HEK293 (cell line): ENCODE measurements at regions of chr16 and their contacts with region 1.

Region 1: GRCh38 chr16:67816240-67817031 is 9.7 kb downstream of the TSNAXIP1 start:
- H3K4me3 ChIP-seq: no peak overlapping the region
- H3K27ac ChIP-seq: no peak overlapping the region
- H3K4me1 ChIP-seq: no peaks in the 10 kb centered on the region
- CTCF ChIP-seq: peak; percentile 98

Region 2: GRCh38 chr16:66304151-66304550 is 1512.3 kb before region 1 on chr16:
- CTCF ChIA-PET with region 1: no interaction called
- POLR2A ChIA-PET with region 1: no interaction called
- H3K4me3 ChIP-seq: no peak overlapping the region
- H3K27ac ChIP-seq: no peak overlapping the region
- H3K4me1 ChIP-seq: no peaks in the 10 kb centered on the region
- CTCF ChIP-seq: no peak

Region 3: DNA sequence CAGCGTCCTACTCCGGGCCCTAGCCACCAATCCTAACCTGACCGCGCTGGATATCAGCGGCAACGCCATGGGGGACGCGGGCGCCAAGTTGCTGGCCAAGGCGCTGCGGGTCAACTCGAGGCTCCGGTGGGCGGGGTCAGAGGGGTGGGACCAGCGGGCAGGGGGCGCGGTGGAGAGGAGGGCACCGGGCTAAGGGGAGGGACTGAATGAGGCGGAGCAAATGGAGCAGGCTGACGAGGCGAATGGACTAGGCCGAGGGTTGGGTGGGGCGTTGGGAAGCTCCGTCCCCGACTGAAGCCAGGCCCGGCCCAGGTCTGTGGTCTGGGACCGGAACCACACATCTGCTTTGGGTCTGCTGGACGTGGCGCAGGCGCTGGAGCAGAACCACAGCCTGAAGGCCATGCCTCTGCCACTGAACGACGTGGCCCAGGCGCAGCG is 166.9 kb before region 1 on chr16:
- CTCF ChIA-PET with region 1: no interaction called
- POLR2A ChIA-PET with region 1: no interaction called
- H3K4me3 ChIP-seq: no peak overlapping the region
- H3K27ac ChIP-seq: no peak overlapping the region
- H3K4me1 ChIP-seq: peaks cover 4% of the 10 kb centered on the region; the same call in 1 of the 2 replicates
- CTCF ChIP-seq: no peak

Region 4: GRCh38 chr16:67672739-67673662 is 143.4 kb before region 1 on chr16:
- CTCF ChIA-PET with region 1: interaction called, 31 read pairs
- POLR2A ChIA-PET with region 1: no interaction called
- H3K4me3 ChIP-seq: no peak overlapping the region
- H3K27ac ChIP-seq: no peak overlapping the region
- H3K4me1 ChIP-seq: 0 out of 2 replicates have a peak, but pooled peaks cover 3% of the 10 kb centered on the region
- CTCF ChIP-seq: peak; percentile 89

Region 5: GRCh38 chr16:67841764-67842508 is 25.5 kb after region 1 on chr16 and contains the start of gene THAP11:
- CTCF ChIA-PET with region 1: interaction called, 15 read pairs
- POLR2A ChIA-PET with region 1: interaction called, 5 read pairs
- H3K4me3 ChIP-seq: peak within 1 kb of the TSS; percentile 92
- H3K27ac ChIP-seq: peak within 1 kb of the TSS; percentile 99
- H3K4me1 ChIP-seq: peaks cover 16% of the 10 kb centered on the region
- CTCF ChIP-seq: peak; percentile 96

Region 6: DNA sequence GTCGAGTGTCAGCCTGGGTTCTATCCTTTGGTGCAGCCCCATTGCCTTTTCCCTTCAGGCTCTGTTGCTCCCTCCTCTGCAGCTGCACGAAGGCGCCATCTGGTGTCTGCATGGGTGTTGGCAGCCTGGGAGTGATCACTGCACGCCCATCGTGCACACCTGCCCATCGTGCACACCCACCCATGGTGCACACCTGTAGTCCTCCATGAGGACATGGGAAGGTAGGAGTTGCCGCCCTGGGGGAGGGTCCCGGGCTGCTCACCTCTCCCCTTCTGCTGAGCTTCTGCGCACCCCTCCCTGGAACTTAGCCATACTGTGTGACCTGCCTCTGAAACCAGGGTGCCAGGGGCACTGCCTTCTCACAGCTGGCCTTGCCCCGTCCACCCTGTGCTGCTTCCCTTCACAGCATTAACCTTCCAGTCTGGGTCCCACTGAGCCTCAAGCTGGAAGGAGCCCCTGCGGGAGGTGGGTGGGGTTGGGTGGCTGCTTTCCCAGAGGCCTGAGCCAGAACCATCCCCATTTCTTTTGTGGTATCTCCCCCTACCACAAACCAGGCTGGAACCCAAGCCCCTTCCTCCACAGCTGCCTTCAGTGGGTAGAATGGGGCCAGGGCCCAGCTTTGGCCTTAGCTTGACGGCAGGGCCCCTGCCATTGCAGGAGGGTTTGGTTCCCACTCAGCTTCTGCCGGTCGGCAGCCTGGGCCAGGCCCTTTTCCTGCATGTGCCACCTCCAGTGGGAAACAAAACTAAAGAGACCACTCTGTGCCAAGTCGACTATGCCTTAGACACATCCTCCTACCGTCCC is 112.3 kb after region 1 on chr16:
- CTCF ChIA-PET with region 1: interaction called, 16 read pairs
- POLR2A ChIA-PET with region 1: no interaction called
- H3K4me3 ChIP-seq: no peak overlapping the region
- H3K27ac ChIP-seq: no peak overlapping the region
- H3K4me1 ChIP-seq: peaks cover 10% of the 10 kb centered on the region; the same call in 1 of the 2 replicates
- CTCF ChIP-seq: peak; percentile 92

Region 7: GRCh38 chr16:68028996-68029395 is 212.6 kb after region 1 on chr16:
- CTCF ChIA-PET with region 1: no interaction called
- POLR2A ChIA-PET with region 1: no interaction called
- H3K4me3 ChIP-seq: no peak overlapping the region
- H3K27ac ChIP-seq: no peak overlapping the region
- H3K4me1 ChIP-seq: no peaks in the 10 kb centered on the region
- CTCF ChIP-seq: no peak

Region 8: GRCh38 chr16:68040507-68041288 is 224.3 kb after region 1 on chr16:
- CTCF ChIA-PET with region 1: interaction called, 12 read pairs
- POLR2A ChIA-PET with region 1: no interaction called
- H3K4me3 ChIP-seq: no peak overlapping the region
- H3K27ac ChIP-seq: no peak overlapping the region
- H3K4me1 ChIP-seq: no peaks in the 10 kb centered on the region
- CTCF ChIP-seq: peak; percentile 81